SK-N-SH (cell line): ENCODE measurements at regions of chr4 and their contacts with region 1.

Region 1: DNA sequence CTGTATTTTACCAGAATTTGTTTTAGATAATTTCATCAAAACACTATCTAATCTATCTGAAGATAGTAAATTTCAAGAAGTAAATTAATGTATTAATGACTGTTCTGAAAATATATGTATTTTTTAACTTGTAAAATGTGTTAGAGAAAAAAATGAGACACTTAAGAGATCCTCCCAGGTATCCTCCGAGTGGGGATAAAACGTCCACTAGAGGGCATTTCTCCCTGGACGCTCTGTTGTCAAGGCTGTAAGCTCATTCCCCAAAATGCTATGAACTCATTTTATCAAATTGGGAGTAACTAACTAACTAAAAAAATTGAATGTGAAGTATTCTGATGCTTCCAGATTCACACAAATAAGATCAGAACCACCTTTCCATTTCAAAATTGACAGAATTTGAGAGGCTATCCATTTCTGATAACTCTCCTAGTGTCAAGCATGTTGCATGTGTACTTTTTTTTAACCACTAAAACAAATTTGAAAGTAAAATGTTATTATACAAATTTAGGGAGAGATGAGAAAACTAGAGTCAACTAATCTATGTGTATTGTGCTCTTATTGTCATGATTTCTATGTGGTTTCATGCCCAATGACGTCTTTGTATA is 337.3 kb upstream of the HS3ST1 start:
- DNase-seq: peak; percentile 26
- H3K4me3 ChIP-seq: no peak overlapping the region
- H3K27ac ChIP-seq: no peak overlapping the region
- H3K4me1 ChIP-seq: no peaks in the 10 kb centered on the region
- H3K27me3 ChIP-seq: no peaks in the 10 kb centered on the region
- CTCF ChIP-seq: peak; percentile 48
- EP300 ChIP-seq: no peak
- RAD21 ChIP-seq: peak; percentile 53

Region 2: DNA sequence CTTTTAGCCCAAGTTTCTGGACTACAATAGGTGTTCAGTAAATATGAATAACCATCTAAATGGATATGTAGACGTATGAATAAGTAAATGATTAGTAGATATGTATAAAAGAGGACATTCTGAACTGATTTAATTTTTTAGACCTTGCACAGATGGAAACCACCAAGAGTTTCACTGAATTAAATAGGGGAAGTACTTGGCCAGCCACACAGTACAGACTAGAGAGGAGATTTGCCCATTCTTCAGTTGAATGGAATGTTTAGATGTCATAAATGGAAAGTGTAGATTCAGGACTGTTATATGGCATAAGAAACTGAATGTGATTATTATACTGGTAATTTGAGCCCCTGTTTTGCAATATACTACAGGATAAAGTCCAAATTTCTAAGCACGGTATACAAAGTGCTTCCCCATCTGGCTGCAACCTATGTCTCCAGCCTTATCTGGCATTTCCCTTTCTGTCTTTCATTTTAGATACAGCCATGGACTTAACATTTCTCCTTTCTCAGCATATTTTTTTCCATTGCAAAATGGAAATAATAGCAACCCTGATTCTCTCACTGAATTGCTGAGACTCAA is 199.4 kb before region 1 on chr4:
- CTCF ChIA-PET with region 1: no interaction called
- POLR2A ChIA-PET with region 1: no interaction called
- DNase-seq: no peak
- H3K4me3 ChIP-seq: no peak overlapping the region
- H3K27ac ChIP-seq: no peak overlapping the region
- H3K4me1 ChIP-seq: no peaks in the 10 kb centered on the region
- H3K27me3 ChIP-seq: no peaks in the 10 kb centered on the region
- CTCF ChIP-seq: no peak
- EP300 ChIP-seq: no peak
- RAD21 ChIP-seq: no peak

Region 3: DNA sequence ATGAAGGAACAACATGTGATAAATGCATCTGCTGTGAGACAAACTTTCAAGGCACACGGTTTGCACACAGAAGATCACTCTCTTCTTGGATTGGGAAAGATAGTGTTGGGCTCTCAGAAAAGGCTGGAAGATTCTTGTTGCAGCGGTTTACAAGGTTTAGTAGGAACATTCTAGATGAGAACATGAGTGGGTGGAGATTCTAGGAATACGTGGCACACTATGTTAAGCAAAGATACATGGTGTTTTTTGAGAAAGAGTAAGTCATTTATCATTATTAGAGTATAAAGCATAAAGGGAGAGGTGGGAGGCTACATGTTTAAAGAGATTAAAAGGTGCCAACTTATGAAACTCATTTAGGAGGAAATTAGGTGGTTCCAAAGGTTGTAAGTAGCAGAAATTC is 11.5 kb after region 1 on chr4:
- CTCF ChIA-PET with region 1: interaction called, 10 read pairs
- POLR2A ChIA-PET with region 1: no interaction called
- DNase-seq: no peak
- H3K4me3 ChIP-seq: no peak overlapping the region
- H3K27ac ChIP-seq: no peak overlapping the region
- H3K4me1 ChIP-seq: no peaks in the 10 kb centered on the region
- H3K27me3 ChIP-seq: no peaks in the 10 kb centered on the region
- CTCF ChIP-seq: no peak
- EP300 ChIP-seq: no peak
- RAD21 ChIP-seq: no peak